ENCODE measurements at regions of chr19 and their contacts with region 1.

Region 1: GRCh38 chr19:50383852-50384684 is at the start of gene POLD1:
- DNase-seq: peak; percentile 97 to 99
- H3K4me3 ChIP-seq: peak within 1 kb of the TSS; percentile 33
- CTCF ChIP-seq: no peak
- POLR2A ChIP-seq: no peak
- total RNA-seq, gene POLD1: 16.8 to 26.6 (median 20.0) TPM

Region 2: GRCh38 chr19:50804420-50805272 is 420.6 kb after region 1 on chr19:
- intact Hi-C with region 1: loop called (anchors 5 kb)
- DNase-seq: peak; percentile 99
- H3K4me3 ChIP-seq: peak overlapping the region; percentile 93
- CTCF ChIP-seq: no peak
- POLR2A ChIP-seq: no peak